AG04449 (cell line): ENCODE measurements at regions of chr12 and their contacts with region 1.

Region 1: DNA sequence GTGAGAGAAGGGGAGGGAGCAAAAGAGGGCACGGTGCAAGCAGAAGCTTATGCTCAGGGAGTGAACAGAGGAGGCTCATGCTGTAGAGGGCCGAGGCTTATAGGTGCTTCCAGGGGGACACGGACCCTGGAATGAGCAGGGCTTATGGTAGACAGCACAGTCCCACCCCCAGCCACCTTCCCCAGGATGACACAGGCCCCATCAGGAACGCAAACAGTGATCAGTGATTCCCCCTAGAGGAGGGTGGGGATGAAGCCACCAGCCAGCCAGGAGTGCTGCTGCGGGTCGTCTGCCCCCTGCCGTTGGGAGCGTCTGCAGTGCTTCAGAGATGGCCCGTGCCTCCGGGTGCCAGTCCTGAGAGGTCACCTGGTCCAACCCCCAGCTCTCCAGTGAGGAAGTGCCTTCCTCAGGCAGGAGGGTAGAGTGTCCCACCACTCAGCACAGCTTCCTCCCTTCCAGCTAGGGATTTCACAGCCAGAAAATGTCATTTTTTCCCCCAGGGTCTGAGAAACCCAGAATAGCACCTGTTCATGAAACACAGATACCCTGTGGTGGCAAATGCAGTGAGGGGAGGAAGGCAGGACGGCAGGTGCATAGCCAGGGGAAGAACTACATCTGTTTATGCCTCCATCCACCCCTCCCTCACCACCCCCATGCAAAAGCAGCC is 60.7 kb downstream of the SLC6A12 start:
- DNase-seq: no peak
- H3K4me3 ChIP-seq: no peak overlapping the region
- CTCF ChIP-seq: peak; percentile 83

Region 2: GRCh38 chr12:138171-138897 is 14.9 kb before region 1 on chr12:
- CTCF ChIA-PET with region 1: interaction called, 10 read pairs
- POLR2A ChIA-PET with region 1: no interaction called
- DNase-seq: no peak
- H3K4me3 ChIP-seq: no peak overlapping the region
- CTCF ChIP-seq: no peak

Region 3: DNA sequence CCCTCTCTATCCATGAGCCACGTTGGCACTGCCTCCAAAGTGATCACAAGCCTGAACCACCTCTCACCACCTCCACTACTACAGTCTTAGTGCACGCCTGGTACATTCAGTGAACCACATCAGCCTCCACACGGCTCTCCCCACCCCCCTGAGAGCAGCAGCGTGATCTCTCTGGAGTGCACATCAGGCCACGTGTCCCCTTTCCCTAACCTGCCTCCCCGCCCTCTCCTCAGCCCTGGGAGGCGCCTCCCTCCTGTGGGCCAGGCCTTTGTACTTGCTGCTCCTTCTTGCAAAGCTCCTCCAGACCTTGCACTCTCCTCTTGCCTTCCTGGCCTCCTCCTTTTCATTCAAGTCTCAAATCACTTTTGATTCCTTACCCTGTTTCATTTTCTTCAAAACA is 11.0 kb after region 1 on chr12:
- CTCF ChIA-PET with region 1: interaction called, 18 read pairs
- POLR2A ChIA-PET with region 1: no interaction called
- DNase-seq: no peak
- H3K4me3 ChIP-seq: no peak overlapping the region
- CTCF ChIP-seq: no peak